ENCODE measurements at regions of chr4 and their contacts with region 1.

Region 1: GRCh38 chr4:185847352-185848107 is 35.5 kb upstream of the SORBS2 start:
- DNase-seq: peak; percentile 80
- ATAC-seq: peak; percentile 87

Region 2: GRCh38 chr4:185608185-185608584 is 239.3 kb before region 1 on chr4:
- intact Hi-C with region 1: no loop called
- DNase-seq: no peak
- ATAC-seq: no peak

Region 3: GRCh38 chr4:185656467-185656931 is 191.0 kb before region 1 on chr4:
- intact Hi-C with region 1: loop called (anchors 10 kb)
- DNase-seq: no peak
- ATAC-seq: peak; percentile 69